Adrenal gland (tissue), 19 donors: ENCODE measurements at regions of chr18 and their contacts with region 1.

Region 1: DNA sequence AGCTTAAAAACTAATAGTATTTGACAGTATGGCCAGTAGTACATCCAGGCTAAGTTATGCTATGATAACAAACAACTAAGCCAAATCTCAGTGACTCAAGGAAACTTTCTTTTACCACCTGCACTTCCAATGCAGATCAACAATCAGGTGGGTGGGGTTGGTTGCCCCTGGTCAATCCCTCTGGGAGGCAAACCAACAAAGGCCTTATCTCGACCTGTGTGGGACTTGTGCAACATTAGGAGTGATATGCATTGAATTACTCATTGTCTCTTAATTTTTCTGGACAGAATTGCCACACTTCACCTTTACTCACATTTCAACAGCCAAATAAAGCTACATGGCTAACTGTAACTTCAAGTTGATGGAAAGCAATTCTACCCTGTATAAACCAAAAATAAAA is 1049.3 kb upstream of the CDH2 start:
- DNase-seq: no peak
- H3K4me3 ChIP-seq: no peak overlapping the region
- H3K27ac ChIP-seq: no peak overlapping the region
- H3K4me1 ChIP-seq: no peaks in the 10 kb centered on the region
- H3K27me3 ChIP-seq: no peaks in the 10 kb centered on the region
- CTCF ChIP-seq: no peak
- POLR2A ChIP-seq: no peak

Region 2: GRCh38 chr18:29078273-29078672 is 147.9 kb before region 1 on chr18:
- intact Hi-C with region 1: no loop called
- DNase-seq: no peak
- H3K4me3 ChIP-seq: no peak overlapping the region
- H3K27ac ChIP-seq: no peak overlapping the region
- H3K4me1 ChIP-seq: no peaks in the 10 kb centered on the region
- H3K27me3 ChIP-seq: no peaks in the 10 kb centered on the region
- CTCF ChIP-seq: no peak
- POLR2A ChIP-seq: no peak

Region 3: GRCh38 chr18:29285471-29285870 is 59.3 kb after region 1 on chr18:
- intact Hi-C with region 1: loop called in 1 of 2 experiments (anchors 10 kb)
- DNase-seq: no peak
- H3K4me3 ChIP-seq: no peak overlapping the region
- H3K27ac ChIP-seq: no peak overlapping the region
- H3K4me1 ChIP-seq: no peaks in the 10 kb centered on the region
- H3K27me3 ChIP-seq: no peaks in the 10 kb centered on the region
- CTCF ChIP-seq: no peak
- POLR2A ChIP-seq: no peak